ENCODE measurements at regions of chr16 and their contacts with region 1.

Region 1: GRCh38 chr16:55944377-55944802 is 69.2 kb upstream of the CES5A start:
- DNase-seq: peak; percentile 58
- ATAC-seq: peak; percentile 43
- H3K4me3 ChIP-seq: no peak overlapping the region
- H3K4me3 Mint-ChIP-seq: no peak overlapping the region
- H3K27ac ChIP-seq: no peak overlapping the region
- H3K27ac Mint-ChIP-seq: no peak overlapping the region
- H3K4me1 ChIP-seq: no peaks in the 10 kb centered on the region
- H3K4me1 Mint-ChIP-seq: peaks cover 4% of the 10 kb centered on the region
- H3K27me3 ChIP-seq: peaks cover 0 to 19% (median 6%) of the 10 kb centered on the region in 4 experiments
- H3K27me3 Mint-ChIP-seq: peaks cover 39% of the 10 kb centered on the region
- CTCF ChIP-seq: peak; percentile 96

Region 2: GRCh38 chr16:55871411-55872038 is 72.9 kb before region 1 on chr16:
- CTCF ChIA-PET with region 1: no interaction called
- POLR2A ChIA-PET with region 1: no interaction called
- intact Hi-C with region 1: no loop called
- DNase-seq: no peak
- ATAC-seq: no peak
- H3K4me3 ChIP-seq: no peak overlapping the region
- H3K4me3 Mint-ChIP-seq: no peak overlapping the region
- H3K27ac ChIP-seq: no peak overlapping the region
- H3K27ac Mint-ChIP-seq: no peak overlapping the region
- H3K4me1 ChIP-seq: no peaks in the 10 kb centered on the region
- H3K4me1 Mint-ChIP-seq: no peaks in the 10 kb centered on the region
- H3K27me3 ChIP-seq: peaks cover 0 to 3% (median 0%) of the 10 kb centered on the region in 4 experiments
- H3K27me3 Mint-ChIP-seq: peaks cover 15% of the 10 kb centered on the region
- CTCF ChIP-seq: no peak

Region 3: DNA sequence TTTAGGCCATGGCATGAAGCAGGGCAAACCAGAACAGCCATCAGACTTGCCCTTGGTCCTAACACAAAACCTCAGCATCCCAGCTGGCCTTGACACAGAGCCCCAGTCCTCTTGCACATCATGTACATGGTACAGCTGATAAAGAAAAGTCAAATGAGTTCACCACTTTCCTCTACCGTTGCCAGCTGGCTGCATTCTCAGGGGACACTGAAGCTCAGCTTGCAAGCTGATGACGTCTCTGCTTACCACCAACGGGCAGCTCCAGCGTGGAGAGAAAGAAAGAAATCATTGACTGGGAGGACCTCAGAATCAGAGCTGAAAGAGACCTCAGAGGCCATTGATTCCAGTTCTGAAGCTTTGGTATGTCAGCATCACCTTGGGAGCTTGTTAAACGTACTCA is 11.5 kb after region 1 on chr16:
- CTCF ChIA-PET with region 1: interaction called, 32 read pairs
- POLR2A ChIA-PET with region 1: no interaction called
- intact Hi-C with region 1: no loop called
- DNase-seq: no peak
- ATAC-seq: no peak
- H3K4me3 ChIP-seq: no peak overlapping the region
- H3K4me3 Mint-ChIP-seq: no peak overlapping the region
- H3K27ac ChIP-seq: no peak overlapping the region
- H3K27ac Mint-ChIP-seq: no peak overlapping the region
- H3K4me1 ChIP-seq: no peaks in the 10 kb centered on the region
- H3K4me1 Mint-ChIP-seq: no peaks in the 10 kb centered on the region
- H3K27me3 ChIP-seq: peaks cover 0 to 6% (median 3%) of the 10 kb centered on the region in 4 experiments
- H3K27me3 Mint-ChIP-seq: peaks cover 14% of the 10 kb centered on the region
- CTCF ChIP-seq: no peak

Region 4: GRCh38 chr16:56257239-56257638 is 312.8 kb after region 1 on chr16:
- CTCF ChIA-PET with region 1: no interaction called
- POLR2A ChIA-PET with region 1: no interaction called
- intact Hi-C with region 1: no loop called
- DNase-seq: no peak
- ATAC-seq: no peak
- H3K4me3 ChIP-seq: no peak overlapping the region
- H3K4me3 Mint-ChIP-seq: no peak overlapping the region
- H3K27ac ChIP-seq: no peak overlapping the region
- H3K27ac Mint-ChIP-seq: no peak overlapping the region
- H3K4me1 ChIP-seq: peaks cover 0 to 5% of the 10 kb centered on the region in 2 donors
- H3K4me1 Mint-ChIP-seq: peaks cover 1% of the 10 kb centered on the region
- H3K27me3 ChIP-seq: peaks cover 0 to 7% (median 0%) of the 10 kb centered on the region in 4 experiments
- H3K27me3 Mint-ChIP-seq: peaks cover 15% of the 10 kb centered on the region
- CTCF ChIP-seq: no peak

Region 5: GRCh38 chr16:56317998-56318826 is 373.8 kb after region 1 on chr16:
- CTCF ChIA-PET with region 1: interaction called, 156 read pairs
- POLR2A ChIA-PET with region 1: no interaction called
- intact Hi-C with region 1: no loop called
- DNase-seq: peak; percentile 75
- ATAC-seq: peak; percentile 98
- H3K4me3 ChIP-seq: peak overlapping the region in 2 of 5 experiments; percentile 12 to 15
- H3K4me3 Mint-ChIP-seq: peak overlapping the region; percentile 39
- H3K27ac ChIP-seq: no peak overlapping the region
- H3K27ac Mint-ChIP-seq: no peak overlapping the region
- H3K4me1 ChIP-seq: peaks cover 3 to 11% of the 10 kb centered on the region in 2 donors
- H3K4me1 Mint-ChIP-seq: peaks cover 13% of the 10 kb centered on the region
- H3K27me3 ChIP-seq: peaks cover 0 to 5% (median 0%) of the 10 kb centered on the region in 4 experiments
- H3K27me3 Mint-ChIP-seq: peaks cover 9% of the 10 kb centered on the region
- CTCF ChIP-seq: peak; percentile 98

Region 6: DNA sequence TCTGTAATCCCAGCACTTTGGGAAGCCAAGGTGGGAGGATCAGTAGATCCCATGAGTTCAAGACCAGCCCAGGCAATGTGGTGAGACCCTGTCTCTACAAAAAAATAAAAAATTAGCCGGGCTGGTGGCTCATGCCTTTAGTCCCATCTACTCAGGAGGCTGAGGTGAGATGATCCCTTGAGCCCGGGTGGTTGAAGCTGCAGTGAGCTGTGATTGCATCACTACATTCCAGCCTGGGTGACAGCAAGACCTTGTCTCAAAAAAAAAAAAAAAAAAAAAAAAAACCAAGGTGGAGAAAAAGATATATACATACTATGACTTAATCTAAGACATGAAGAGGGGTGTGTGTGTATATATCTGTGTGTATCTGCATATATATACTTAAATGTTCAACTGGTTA is 548.7 kb after region 1 on chr16:
- CTCF ChIA-PET with region 1: no interaction called
- POLR2A ChIA-PET with region 1: no interaction called
- intact Hi-C with region 1: no loop called
- DNase-seq: no peak
- ATAC-seq: no peak
- H3K4me3 ChIP-seq: no peak overlapping the region
- H3K4me3 Mint-ChIP-seq: no peak overlapping the region
- H3K27ac ChIP-seq: no peak overlapping the region
- H3K27ac Mint-ChIP-seq: no peak overlapping the region
- H3K4me1 ChIP-seq: peaks cover 3% of the 10 kb centered on the region in 2 donors
- H3K4me1 Mint-ChIP-seq: peaks cover 11% of the 10 kb centered on the region
- H3K27me3 ChIP-seq: no peaks in the 10 kb centered on the region
- H3K27me3 Mint-ChIP-seq: no peaks in the 10 kb centered on the region
- CTCF ChIP-seq: no peak

Region 7: GRCh38 chr16:56708525-56709442 is 764.4 kb after region 1 on chr16:
- CTCF ChIA-PET with region 1: no interaction called
- POLR2A ChIA-PET with region 1: no interaction called
- intact Hi-C with region 1: loop called (anchors 10 kb)
- DNase-seq: no peak
- ATAC-seq: no peak
- H3K4me3 ChIP-seq: no peak overlapping the region
- H3K4me3 Mint-ChIP-seq: no peak overlapping the region
- H3K27ac ChIP-seq: no peak overlapping the region
- H3K27ac Mint-ChIP-seq: no peak overlapping the region
- H3K4me1 ChIP-seq: no peaks in the 10 kb centered on the region
- H3K4me1 Mint-ChIP-seq: no peaks in the 10 kb centered on the region
- H3K27me3 ChIP-seq: peaks cover 0 to 8% (median 0%) of the 10 kb centered on the region in 4 experiments
- H3K27me3 Mint-ChIP-seq: peaks cover 3% of the 10 kb centered on the region
- CTCF ChIP-seq: no peak